Aorta (tissue), 5 donors: ENCODE measurements at regions of chr3 and their contacts with region 1.

Region 1: GRCh38 chr3:119293871-119294695 is at the start of gene ARHGAP31:
- DNase-seq: peak; percentile 80 to 87
- ATAC-seq: peak; percentile 87
- H3K4me3 ChIP-seq: peak within 1 kb of the TSS; percentile 73 to 79
- H3K27ac ChIP-seq: peak within 1 kb of the TSS; percentile 74 to 90
- H3K4me1 ChIP-seq: no peaks in the 10 kb centered on the region
- H3K27me3 ChIP-seq: no peaks in the 10 kb centered on the region
- total RNA-seq, gene ARHGAP31: 29.1 to 65.0 TPM

Region 2: GRCh38 chr3:119322835-119323722 is 29.0 kb after region 1 on chr3:
- intact Hi-C with region 1: loop called in 1 of 2 experiments (anchors 1 kb)
- DNase-seq: peak; percentile 96
- ATAC-seq: peak; percentile 94
- H3K4me3 ChIP-seq: peak overlapping the region; percentile 40 to 69
- H3K27ac ChIP-seq: peak overlapping the region in 1 of 2 donors; percentile 60
- H3K4me1 ChIP-seq: no peaks in the 10 kb centered on the region
- H3K27me3 ChIP-seq: no peaks in the 10 kb centered on the region